ENCODE measurements at regions of chr5 and their contacts with region 1.

Region 1: DNA sequence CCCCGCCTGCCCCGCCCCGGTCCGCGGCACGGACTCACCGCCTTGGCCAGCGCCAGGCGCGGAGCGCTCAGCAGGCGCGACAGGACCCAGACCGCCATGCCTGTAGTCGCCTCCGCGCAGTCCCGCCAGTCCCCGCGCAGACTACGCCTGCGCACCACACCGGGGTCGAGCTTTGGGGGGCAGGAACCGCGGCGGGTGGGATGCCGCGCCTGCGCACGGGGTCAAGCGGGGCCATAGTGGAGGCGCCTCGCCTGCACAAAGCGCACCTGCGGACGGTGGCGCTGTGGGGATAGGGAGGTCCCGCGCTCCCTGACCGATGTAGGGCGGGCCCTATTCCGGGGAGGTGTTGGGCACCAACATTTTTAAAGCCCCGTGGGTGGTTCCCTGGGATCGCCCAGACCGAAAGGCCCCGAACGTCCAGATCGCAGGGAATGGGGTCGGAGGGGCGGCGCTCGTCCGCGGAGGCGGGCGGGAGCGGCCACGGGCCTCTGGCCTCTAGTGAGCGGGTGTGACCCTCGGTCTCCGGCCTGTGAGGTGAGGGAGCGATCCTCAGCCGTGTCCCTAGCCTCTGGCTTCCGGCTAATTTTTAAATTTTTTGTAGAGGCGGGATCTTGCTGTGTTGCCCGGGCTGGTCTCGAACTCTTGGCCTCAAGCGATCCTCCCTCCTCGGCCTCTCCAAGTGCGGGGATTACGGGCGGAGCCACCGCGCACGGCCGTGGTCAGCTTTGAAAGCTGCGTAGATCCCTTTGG is 70.8 kb upstream of the LPCAT1 start:
- DNase-seq: peak in 1 of 2 experiments; percentile 85
- H3K4me3 ChIP-seq: no peak overlapping the region
- H3K27ac ChIP-seq: no peak overlapping the region
- H3K4me1 ChIP-seq: peaks cover 5% of the 10 kb centered on the region; the same call in 1 of the 2 replicates
- H3K27me3 ChIP-seq: no peaks in the 10 kb centered on the region
- CTCF ChIP-seq: no peak

Region 2: GRCh38 chr5:1516751-1517601 is 77.6 kb before region 1 on chr5:
- CTCF ChIA-PET with region 1: interaction called, 3 read pairs
- POLR2A ChIA-PET with region 1: no interaction called
- intact Hi-C with region 1: loop called (anchors 1 kb)
- DNase-seq: peak; percentile 38 to 86
- H3K4me3 ChIP-seq: peak overlapping the region; percentile 3; the same call in 1 of the 2 replicates
- H3K27ac ChIP-seq: peak overlapping the region; percentile 85
- H3K4me1 ChIP-seq: peaks cover 66% of the 10 kb centered on the region
- H3K27me3 ChIP-seq: no peaks in the 10 kb centered on the region
- CTCF ChIP-seq: no peak

Measured in PC-9 (cell line).